ENCODE measurements at regions of chr9 and their contacts with region 1.

Region 1: DNA sequence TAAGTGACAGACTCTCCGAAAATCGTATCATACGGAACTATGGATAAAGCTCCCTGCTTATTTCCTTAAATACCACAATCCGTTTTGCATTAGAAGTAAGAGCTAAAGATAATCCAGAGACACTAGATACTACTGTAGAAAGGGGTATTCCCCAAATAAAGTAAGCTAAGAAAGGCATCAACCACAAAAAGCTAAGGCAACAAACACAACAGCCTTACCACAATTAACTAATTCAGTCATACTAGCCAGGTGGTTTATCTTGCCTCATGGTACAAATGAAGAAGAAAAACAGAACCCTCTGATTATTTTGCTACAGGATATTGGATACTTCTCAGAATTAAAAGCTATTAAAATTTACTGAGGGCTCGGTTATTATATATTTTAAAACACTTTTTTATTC is 14.1 kb downstream of the ERP44 start:
- DNase-seq: peak; percentile 71
- ATAC-seq: peak; percentile 86
- H3K4me3 ChIP-seq: no peak overlapping the region
- H3K27ac ChIP-seq: peak overlapping the region; percentile 94
- H3K4me1 ChIP-seq: peaks cover 32% of the 10 kb centered on the region
- H3K27me3 ChIP-seq: no peaks in the 10 kb centered on the region
- CTCF ChIP-seq: no peak
- EP300 ChIP-seq: peak; percentile 95 to 99
- POLR2A ChIP-seq: no peak
- RAD21 ChIP-seq: no peak

Region 2: GRCh38 chr9:100058699-100059579 is 25.8 kb before region 1 on chr9:
- CTCF ChIA-PET with region 1: interaction called, 5 read pairs
- POLR2A ChIA-PET with region 1: interaction called, 4 read pairs
- RAD21 ChIA-PET with region 1: interaction called, 38 read pairs
- SMC1A ChIA-PET with region 1: interaction called, 45 read pairs
- in situ Hi-C with region 1: no loop called
- intact Hi-C with region 1: loop called (anchors 2 kb)
- DNase-seq: peak; percentile 78
- ATAC-seq: peak; percentile 91
- H3K4me3 ChIP-seq: peak overlapping the region; percentile 34; the same call in 1 of the 2 replicates
- H3K27ac ChIP-seq: peak overlapping the region; percentile 57
- H3K4me1 ChIP-seq: peaks cover 29% of the 10 kb centered on the region
- H3K27me3 ChIP-seq: no peaks in the 10 kb centered on the region
- CTCF ChIP-seq: no peak
- EP300 ChIP-seq: peak; percentile 85 to 92
- POLR2A ChIP-seq: no peak
- RAD21 ChIP-seq: 0 out of 2 replicates have a peak, but pooled peaks have one; percentile 11

Region 3: GRCh38 chr9:100066539-100066938 is 18.2 kb before region 1 on chr9:
- CTCF ChIA-PET with region 1: interaction called, 5 read pairs
- POLR2A ChIA-PET with region 1: interaction called, 5 read pairs
- RAD21 ChIA-PET with region 1: interaction called, 6 read pairs
- SMC1A ChIA-PET with region 1: interaction called, 30 read pairs
- in situ Hi-C with region 1: no loop called
- intact Hi-C with region 1: no loop called
- DNase-seq: peak; percentile 25
- ATAC-seq: peak; percentile 78
- H3K4me3 ChIP-seq: no peak overlapping the region
- H3K27ac ChIP-seq: no peak overlapping the region
- H3K4me1 ChIP-seq: peaks cover 7% of the 10 kb centered on the region
- H3K27me3 ChIP-seq: no peaks in the 10 kb centered on the region
- CTCF ChIP-seq: no peak
- EP300 ChIP-seq: no peak
- POLR2A ChIP-seq: no peak
- RAD21 ChIP-seq: no peak

Region 4: GRCh38 chr9:100098887-100099721 is 14.4 kb after region 1 on chr9 and contains the starts of genes ERP44 and INVS:
- CTCF ChIA-PET with region 1: interaction called, 35 read pairs
- POLR2A ChIA-PET with region 1: interaction called, 7 read pairs
- RAD21 ChIA-PET with region 1: interaction called, 39 read pairs
- SMC1A ChIA-PET with region 1: interaction called, 63 read pairs
- in situ Hi-C with region 1: no loop called
- intact Hi-C with region 1: loop called (anchors 1 kb)
- DNase-seq: peak; percentile 97
- ATAC-seq: peak; percentile 98
- H3K4me3 ChIP-seq: peak within 1 kb of the TSS; percentile 99
- H3K27ac ChIP-seq: peak within 1 kb of the TSS; percentile 92
- H3K4me1 ChIP-seq: no peaks in the 10 kb centered on the region
- H3K27me3 ChIP-seq: no peaks in the 10 kb centered on the region
- CTCF ChIP-seq: no peak
- EP300 ChIP-seq: no peak
- POLR2A ChIP-seq: peak; percentile 96
- RAD21 ChIP-seq: 0 out of 2 replicates have a peak, but pooled peaks have one; percentile 1
- polyA plus RNA-seq, gene ERP44: 13.5 to 14.4 TPM
- polyA plus RNA-seq, gene INVS: 0.93 to 1.0 TPM

Region 5: GRCh38 chr9:100206899-100207298 is 122.2 kb after region 1 on chr9:
- CTCF ChIA-PET with region 1: interaction called, 4 read pairs
- POLR2A ChIA-PET with region 1: no interaction called
- RAD21 ChIA-PET with region 1: interaction called, 11 read pairs
- SMC1A ChIA-PET with region 1: interaction called, 4 read pairs
- in situ Hi-C with region 1: no loop called
- intact Hi-C with region 1: no loop called
- DNase-seq: no peak
- ATAC-seq: no peak
- H3K4me3 ChIP-seq: no peak overlapping the region
- H3K27ac ChIP-seq: no peak overlapping the region
- H3K4me1 ChIP-seq: no peaks in the 10 kb centered on the region
- H3K27me3 ChIP-seq: no peaks in the 10 kb centered on the region
- CTCF ChIP-seq: no peak
- EP300 ChIP-seq: no peak
- POLR2A ChIP-seq: no peak
- RAD21 ChIP-seq: no peak